Natural killer cell (primary cell): ENCODE measurements at regions of chr5 and their contacts with region 1.

Region 1: GRCh38 chr5:146291421-146292074 is 47.1 kb upstream of the POU4F3 start:
- DNase-seq: peak in 1 of 2 donors; percentile 69
- ATAC-seq: peak; percentile 58 to 78 (median 68)
- H3K4me3 ChIP-seq: no peak overlapping the region
- H3K4me3 Mint-ChIP-seq: no peak overlapping the region
- H3K27ac ChIP-seq: no peak overlapping the region
- H3K27ac Mint-ChIP-seq: no peak overlapping the region
- H3K4me1 ChIP-seq: no peaks in the 10 kb centered on the region
- H3K4me1 Mint-ChIP-seq: no peaks in the 10 kb centered on the region
- H3K27me3 ChIP-seq: no peaks in the 10 kb centered on the region
- H3K27me3 Mint-ChIP-seq: no peaks in the 10 kb centered on the region
- CTCF ChIP-seq: peak; percentile 78

Region 2: GRCh38 chr5:145090115-145090514 is 1201.4 kb before region 1 on chr5:
- intact Hi-C with region 1: no loop called
- DNase-seq: no peak
- ATAC-seq: no peak
- H3K4me3 ChIP-seq: no peak overlapping the region
- H3K4me3 Mint-ChIP-seq: no peak overlapping the region
- H3K27ac ChIP-seq: no peak overlapping the region
- H3K27ac Mint-ChIP-seq: no peak overlapping the region
- H3K4me1 ChIP-seq: no peaks in the 10 kb centered on the region
- H3K4me1 Mint-ChIP-seq: no peaks in the 10 kb centered on the region
- H3K27me3 ChIP-seq: no peaks in the 10 kb centered on the region
- H3K27me3 Mint-ChIP-seq: no peaks in the 10 kb centered on the region
- CTCF ChIP-seq: no peak

Region 3: DNA sequence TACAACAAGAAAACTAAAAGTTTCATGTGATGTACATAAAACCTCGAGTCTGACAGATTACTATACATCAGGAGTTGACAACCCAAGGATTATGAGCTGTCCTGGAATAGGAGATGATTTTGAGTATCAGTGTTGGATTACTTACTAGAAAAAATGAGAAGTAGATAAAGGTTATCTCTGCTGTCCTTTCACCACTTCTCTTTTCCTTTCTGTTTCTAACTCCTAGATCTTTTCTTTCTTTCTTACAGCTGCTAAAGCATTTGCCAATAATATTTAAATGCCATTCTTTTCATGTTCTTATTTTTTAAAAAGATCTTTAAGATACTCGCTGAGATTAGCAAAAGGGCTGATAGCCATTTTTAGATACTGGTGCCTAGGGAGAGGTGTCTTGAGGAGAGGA is 73.4 kb before region 1 on chr5:
- intact Hi-C with region 1: no loop called
- DNase-seq: no peak
- ATAC-seq: no peak
- H3K4me3 ChIP-seq: no peak overlapping the region
- H3K4me3 Mint-ChIP-seq: no peak overlapping the region
- H3K27ac ChIP-seq: no peak overlapping the region
- H3K27ac Mint-ChIP-seq: no peak overlapping the region
- H3K4me1 ChIP-seq: no peaks in the 10 kb centered on the region
- H3K4me1 Mint-ChIP-seq: peaks cover 27 to 33% of the 10 kb centered on the region in 2 donors
- H3K27me3 ChIP-seq: no peaks in the 10 kb centered on the region
- H3K27me3 Mint-ChIP-seq: no peaks in the 10 kb centered on the region
- CTCF ChIP-seq: no peak

Region 4: GRCh38 chr5:146426853-146427618 is 135.5 kb after region 1 on chr5:
- intact Hi-C with region 1: loop called (anchors 1 kb)
- DNase-seq: peak in 1 of 2 donors; percentile 57
- ATAC-seq: peak; percentile 46 to 76 (median 61)
- H3K4me3 ChIP-seq: no peak overlapping the region
- H3K4me3 Mint-ChIP-seq: no peak overlapping the region
- H3K27ac ChIP-seq: no peak overlapping the region
- H3K27ac Mint-ChIP-seq: no peak overlapping the region
- H3K4me1 ChIP-seq: no peaks in the 10 kb centered on the region
- H3K4me1 Mint-ChIP-seq: peaks cover 5 to 7% of the 10 kb centered on the region in 2 donors
- H3K27me3 ChIP-seq: no peaks in the 10 kb centered on the region
- H3K27me3 Mint-ChIP-seq: peaks cover 10 to 14% of the 10 kb centered on the region in 2 donors
- CTCF ChIP-seq: peak; percentile 77